ENCODE measurements at regions of chr12 and their contacts with region 1.

Region 1: GRCh38 chr12:120199595-120200306 is 1.2 kb downstream of the RPLP0 start:
- DNase-seq: no peak
- CTCF ChIP-seq: no peak

Region 2: GRCh38 chr12:119988782-119989668 is 210.7 kb before region 1 on chr12 and contains the start of gene BICDL1:
- CTCF ChIA-PET with region 1: no interaction called
- POLR2A ChIA-PET with region 1: interaction called, 10 read pairs
- DNase-seq: peak; percentile 97
- CTCF ChIP-seq: no peak

Region 3: GRCh38 chr12:120116792-120117651 is 82.7 kb before region 1 on chr12:
- CTCF ChIA-PET with region 1: interaction called, 11 read pairs
- POLR2A ChIA-PET with region 1: interaction called, 97 read pairs
- DNase-seq: peak; percentile 96
- CTCF ChIP-seq: no peak

Region 4: GRCh38 chr12:120159509-120160237 is 40.1 kb before region 1 on chr12:
- CTCF ChIA-PET with region 1: interaction called, 4 read pairs
- POLR2A ChIA-PET with region 1: interaction called, 14 read pairs
- DNase-seq: no peak
- CTCF ChIP-seq: no peak

Region 5: DNA sequence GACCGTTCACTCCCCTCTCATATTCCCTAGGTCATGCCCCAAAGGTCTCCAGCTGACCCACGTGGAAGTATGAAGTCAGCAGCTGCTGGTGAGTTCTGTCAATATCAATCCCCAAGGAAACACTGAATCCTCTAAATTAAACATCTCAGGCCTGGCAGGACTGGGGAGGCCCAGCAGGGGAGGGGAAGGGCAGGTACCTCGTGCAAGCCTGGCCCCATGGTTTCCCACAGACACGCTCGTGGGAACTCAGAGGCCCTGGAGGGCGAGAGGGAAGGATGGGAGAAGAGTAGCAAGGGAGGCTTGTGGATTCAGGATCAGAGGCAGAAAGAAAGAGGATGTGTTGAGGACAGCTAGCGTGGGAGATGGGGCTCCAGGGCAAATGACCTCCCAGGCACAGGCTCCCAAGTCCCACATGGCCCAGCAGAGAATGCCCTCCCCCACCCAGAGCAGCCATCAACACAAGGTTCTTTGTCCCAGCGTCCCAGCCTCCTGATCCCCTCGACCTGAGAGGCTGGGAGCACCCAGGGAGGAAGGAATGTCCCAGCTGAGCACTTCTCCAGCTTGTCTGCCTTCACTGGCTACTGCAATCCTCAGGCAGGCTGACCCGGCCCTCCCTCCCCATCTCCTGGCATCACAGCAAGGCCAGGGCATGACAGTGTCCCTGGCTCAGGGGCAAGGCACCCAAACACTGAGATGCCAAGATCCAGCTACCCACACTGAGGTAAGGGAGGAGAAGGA is 21.3 kb after region 1 on chr12:
- CTCF ChIA-PET with region 1: interaction called, 17 read pairs
- POLR2A ChIA-PET with region 1: interaction called, 21 read pairs
- DNase-seq: no peak
- CTCF ChIP-seq: no peak

Region 6: GRCh38 chr12:120257041-120257821 is 57.5 kb after region 1 on chr12:
- CTCF ChIA-PET with region 1: no interaction called
- POLR2A ChIA-PET with region 1: interaction called, 10 read pairs
- DNase-seq: no peak
- CTCF ChIP-seq: no peak

Region 7: DNA sequence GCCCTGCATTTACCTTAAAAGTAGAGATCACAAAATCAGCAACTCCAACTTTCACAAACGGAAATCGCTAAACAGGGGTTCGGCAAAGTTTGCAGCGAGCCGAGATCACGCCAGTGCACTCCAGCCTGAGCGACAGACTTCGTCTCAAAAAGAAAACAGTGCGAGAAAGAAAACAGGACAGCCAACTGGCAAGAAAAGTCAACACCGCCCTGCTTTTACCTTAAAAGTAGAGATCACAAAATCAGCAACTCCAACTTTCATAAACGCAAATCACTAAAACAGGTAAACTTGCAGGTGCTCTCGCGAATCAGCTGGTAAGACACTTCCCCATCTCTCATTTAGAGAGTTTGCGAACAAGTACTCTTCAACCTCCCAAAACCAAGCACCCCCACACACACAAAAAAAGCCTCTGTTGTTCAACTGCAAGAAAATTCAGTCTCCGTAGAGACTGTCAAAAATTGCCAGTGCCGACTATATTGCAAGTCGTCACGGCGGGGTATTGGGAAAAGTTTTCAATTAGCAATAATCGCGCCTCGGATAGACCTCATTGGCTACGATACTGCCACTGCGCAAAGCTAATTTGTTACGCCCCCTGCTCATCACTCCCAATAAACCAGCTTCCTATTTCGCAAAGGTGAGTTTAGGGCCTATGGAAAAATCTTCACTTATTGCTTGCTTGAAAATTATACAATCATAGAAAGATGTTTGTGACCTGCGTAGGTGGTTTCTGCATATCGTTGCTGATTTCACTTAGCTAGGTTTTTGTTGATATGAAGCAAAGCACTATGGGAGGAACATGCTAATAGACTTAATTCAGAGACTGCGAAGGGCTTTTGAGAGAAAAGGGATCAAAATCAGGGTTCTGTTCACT is 93.1 kb after region 1 on chr12 and contains the start of gene RNU4-1:
- CTCF ChIA-PET with region 1: interaction called, 5 read pairs
- POLR2A ChIA-PET with region 1: interaction called, 101 read pairs
- DNase-seq: peak; percentile 56
- CTCF ChIP-seq: no peak

Region 8: GRCh38 chr12:120346681-120347080 is 146.9 kb after region 1 on chr12:
- CTCF ChIA-PET with region 1: no interaction called
- POLR2A ChIA-PET with region 1: no interaction called
- DNase-seq: no peak
- CTCF ChIP-seq: no peak

Region 9: GRCh38 chr12:120710031-120710804 is 510.5 kb after region 1 on chr12 and contains the start of gene UNC119B:
- CTCF ChIA-PET with region 1: no interaction called
- POLR2A ChIA-PET with region 1: no interaction called
- DNase-seq: peak; percentile 88
- CTCF ChIP-seq: no peak